Activated CD4-positive, alpha-beta T cell treated with anti-CD3 and anti-CD28 coated beads for 36 hours (primary cell): ENCODE measurements at regions of chr16 and their contacts with region 1.

Region 1: DNA sequence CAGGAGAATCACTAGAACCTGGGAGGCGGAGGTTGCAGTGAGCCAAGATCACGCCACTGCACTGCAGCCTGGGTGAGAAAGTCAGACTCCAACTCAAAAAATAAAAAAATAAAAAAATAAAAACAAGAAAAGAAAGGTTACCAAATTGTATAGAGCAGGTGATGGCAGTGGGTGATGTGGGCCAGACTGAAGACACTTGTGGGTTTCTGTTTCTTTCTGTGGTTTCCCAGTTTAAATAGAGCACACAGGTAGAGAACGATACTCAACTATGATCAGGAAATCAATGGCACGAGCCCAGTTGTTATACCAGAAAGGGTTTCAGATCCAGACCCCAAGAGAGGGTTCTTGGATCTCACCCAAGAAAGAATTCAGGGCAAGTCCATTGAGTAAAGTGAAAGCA is 32.6 kb downstream of the NUBP1 start:
- DNase-seq: no peak
- ATAC-seq: peak; percentile 73
- H3K4me3 Mint-ChIP-seq: no peak overlapping the region
- H3K27ac Mint-ChIP-seq: no peak overlapping the region
- H3K4me1 Mint-ChIP-seq: peaks cover 7% of the 10 kb centered on the region
- H3K27me3 Mint-ChIP-seq: peaks cover 8% of the 10 kb centered on the region

Region 2: GRCh38 chr16:10708969-10709368 is 67.3 kb before region 1 on chr16:
- CTCF ChIA-PET with region 1: no interaction called
- POLR2A ChIA-PET with region 1: no interaction called
- intact Hi-C with region 1: loop called in 1 of 2 experiments (anchors 10 kb)
- DNase-seq: no peak
- ATAC-seq: no peak
- H3K4me3 Mint-ChIP-seq: no peak overlapping the region
- H3K27ac Mint-ChIP-seq: no peak overlapping the region
- H3K4me1 Mint-ChIP-seq: no peaks in the 10 kb centered on the region
- H3K27me3 Mint-ChIP-seq: peaks cover 3% of the 10 kb centered on the region